Calu3 (cell line): ENCODE measurements at regions of chr18 and their contacts with region 1.

Region 1: DNA sequence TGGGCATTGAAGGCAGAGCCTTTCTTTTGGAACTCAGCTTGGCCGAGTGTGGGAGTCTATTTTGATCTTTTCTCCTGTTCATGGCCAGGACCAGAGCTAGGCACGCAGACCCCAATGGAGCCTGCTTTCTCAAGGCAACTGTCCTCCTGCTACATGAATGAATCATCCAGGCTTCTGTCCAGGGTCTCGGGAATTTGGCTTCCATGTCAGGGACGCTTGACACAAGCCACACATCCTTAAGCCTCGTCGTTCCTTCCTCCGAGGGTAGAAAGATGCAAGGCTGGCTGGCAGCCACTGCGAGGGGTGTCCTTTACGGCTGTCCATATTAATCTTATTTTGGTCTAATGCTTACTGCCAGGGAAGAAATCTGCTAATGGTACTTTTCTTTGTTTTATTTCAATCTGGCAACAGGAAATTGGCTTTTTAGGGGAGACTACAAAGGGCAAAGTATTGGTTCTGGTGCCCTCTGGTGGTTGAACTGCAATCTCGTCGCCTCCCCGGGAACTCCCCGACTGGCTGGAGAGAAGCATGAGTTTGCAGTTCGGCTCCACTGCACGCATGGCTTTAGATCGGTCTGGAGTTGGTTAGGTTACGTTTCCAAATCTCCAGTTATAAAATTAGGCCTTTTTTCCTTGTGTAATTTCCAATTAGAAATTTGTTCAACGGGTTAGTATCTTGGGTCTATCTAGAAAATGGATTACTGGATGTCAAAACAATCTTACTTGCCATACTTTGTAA is 135.2 kb downstream of the ALPK2 start:
- DNase-seq: peak; percentile 80
- H3K4me3 Mint-ChIP-seq: no peak overlapping the region
- H3K27ac Mint-ChIP-seq: no peak overlapping the region
- H3K4me1 Mint-ChIP-seq: peaks cover 46% of the 10 kb centered on the region
- H3K27me3 Mint-ChIP-seq: peaks cover 4% of the 10 kb centered on the region
- CTCF ChIP-seq: peak; percentile 72

Region 2: GRCh38 chr18:58051765-58052460 is 441.8 kb before region 1 on chr18:
- CTCF ChIA-PET with region 1: no interaction called
- intact Hi-C with region 1: loop called (anchors 10 kb)
- DNase-seq: no peak
- H3K4me3 Mint-ChIP-seq: peak overlapping the region; percentile 26
- H3K27ac Mint-ChIP-seq: peak overlapping the region; percentile 61
- H3K4me1 Mint-ChIP-seq: peaks cover 48% of the 10 kb centered on the region
- H3K27me3 Mint-ChIP-seq: no peaks in the 10 kb centered on the region
- CTCF ChIP-seq: peak; percentile 27

Region 3: GRCh38 chr18:58400337-58400870 is 93.3 kb before region 1 on chr18:
- CTCF ChIA-PET with region 1: interaction called, 3 read pairs
- intact Hi-C with region 1: loop called (anchors 1 kb)
- DNase-seq: no peak
- H3K4me3 Mint-ChIP-seq: no peak overlapping the region
- H3K27ac Mint-ChIP-seq: no peak overlapping the region
- H3K4me1 Mint-ChIP-seq: no peaks in the 10 kb centered on the region
- H3K27me3 Mint-ChIP-seq: no peaks in the 10 kb centered on the region
- CTCF ChIP-seq: no peak

Region 4: DNA sequence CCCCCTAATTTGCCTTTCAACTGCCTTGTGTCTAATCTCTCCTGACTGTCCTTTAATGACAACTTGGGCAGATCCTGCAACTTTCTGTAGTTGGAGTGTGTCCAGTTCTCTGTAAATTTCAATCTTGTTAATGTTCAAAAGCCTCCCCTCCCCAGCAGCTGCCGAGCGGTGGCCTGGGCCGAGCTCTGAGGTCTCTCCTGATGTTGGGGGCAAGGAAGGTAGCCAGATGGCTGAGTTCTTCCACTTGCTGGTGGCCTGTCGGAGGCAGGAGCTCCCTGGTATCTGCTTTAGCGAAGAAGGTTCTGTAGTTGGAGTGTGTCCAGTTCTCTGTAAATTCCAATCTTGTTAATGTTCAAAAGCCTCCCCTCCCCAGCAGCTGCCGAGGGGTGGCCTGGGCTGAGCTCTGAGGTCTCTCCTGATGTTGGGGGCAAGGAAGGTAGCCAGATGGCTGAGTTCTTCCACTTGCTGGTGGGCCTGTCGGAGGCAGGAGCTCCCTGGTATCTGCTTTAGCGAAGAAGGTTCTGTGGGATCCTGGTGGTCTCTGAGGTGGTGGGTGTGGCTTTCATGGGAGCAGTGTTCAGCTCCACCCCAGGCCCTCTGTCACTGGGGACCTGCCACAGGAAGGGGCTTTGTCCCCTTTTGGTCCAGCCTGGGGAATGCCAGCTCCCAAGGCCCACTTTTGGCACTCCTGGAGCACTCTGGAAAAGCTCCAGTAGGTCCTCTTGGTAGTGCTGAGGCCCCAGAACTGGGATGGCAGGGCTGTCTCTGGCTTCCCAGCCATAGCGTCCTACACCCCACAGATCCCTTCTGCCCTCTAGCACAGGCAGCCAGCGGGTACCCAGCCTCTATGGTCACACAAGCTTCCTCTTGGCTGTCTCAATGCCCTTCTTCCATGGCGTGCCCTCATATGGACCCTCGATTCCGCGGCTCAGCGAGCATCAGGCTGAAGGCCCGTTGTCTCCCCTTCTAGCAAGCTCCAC is 76.7 kb before region 1 on chr18:
- CTCF ChIA-PET with region 1: no interaction called
- intact Hi-C with region 1: loop called (anchors 5 kb)
- DNase-seq: no peak
- H3K4me3 Mint-ChIP-seq: peak overlapping the region; percentile 17
- H3K27ac Mint-ChIP-seq: peak overlapping the region; percentile 79
- H3K4me1 Mint-ChIP-seq: peaks cover 38% of the 10 kb centered on the region
- H3K27me3 Mint-ChIP-seq: no peaks in the 10 kb centered on the region
- CTCF ChIP-seq: no peak